Natural killer cell (primary cell): ENCODE measurements at regions of chr12 and their contacts with region 1.

Region 1: GRCh38 chr12:110689281-110690126 is 589 bp upstream of the HVCN1 start:
- DNase-seq: peak; percentile 40 to 74
- ATAC-seq: peak; percentile 77 to 83 (median 80)
- H3K4me3 ChIP-seq: peak overlapping the region; percentile 77
- H3K4me3 Mint-ChIP-seq: peak overlapping the region; percentile 91
- H3K27ac ChIP-seq: peak overlapping the region; percentile 75
- H3K27ac Mint-ChIP-seq: peak overlapping the region; percentile 81 to 92
- H3K4me1 ChIP-seq: peaks cover 65% of the 10 kb centered on the region
- H3K4me1 Mint-ChIP-seq: peaks cover 36 to 56% of the 10 kb centered on the region in 2 donors
- H3K27me3 ChIP-seq: no peaks in the 10 kb centered on the region
- H3K27me3 Mint-ChIP-seq: no peaks in the 10 kb centered on the region
- CTCF ChIP-seq: no peak

Region 2: GRCh38 chr12:110661337-110661972 is 28.0 kb before region 1 on chr12:
- intact Hi-C with region 1: loop called (anchors 1 kb)
- DNase-seq: peak; percentile 72 to 74
- ATAC-seq: peak; percentile 89 to 90 (median 89)
- H3K4me3 ChIP-seq: no peak overlapping the region
- H3K4me3 Mint-ChIP-seq: peak overlapping the region; percentile 76
- H3K27ac ChIP-seq: peak overlapping the region; percentile 80
- H3K27ac Mint-ChIP-seq: peak overlapping the region; percentile 93 to 96
- H3K4me1 ChIP-seq: peaks cover 27% of the 10 kb centered on the region
- H3K4me1 Mint-ChIP-seq: peaks cover 38 to 40% of the 10 kb centered on the region in 2 donors
- H3K27me3 ChIP-seq: no peaks in the 10 kb centered on the region
- H3K27me3 Mint-ChIP-seq: no peaks in the 10 kb centered on the region
- CTCF ChIP-seq: no peak

Region 3: DNA sequence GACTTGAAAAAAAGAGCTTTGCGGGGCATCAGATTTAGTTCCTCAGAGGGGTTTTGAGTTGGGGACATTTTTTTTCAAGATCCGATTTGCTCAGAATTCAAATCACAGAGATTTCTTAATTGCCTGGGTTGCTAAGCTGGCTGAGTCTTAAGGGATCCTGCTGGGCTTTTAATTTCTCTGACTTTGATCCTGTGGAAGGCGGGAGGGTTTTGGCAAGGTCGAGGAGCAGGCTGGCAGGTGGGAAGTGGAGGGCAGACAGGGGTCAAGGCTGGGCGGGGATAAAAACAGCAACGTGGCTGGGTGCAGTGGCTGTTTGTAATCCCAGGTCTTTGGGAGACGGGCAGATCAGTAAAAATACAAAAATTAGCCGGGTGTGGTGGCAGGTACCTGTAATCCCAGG is 123.8 kb after region 1 on chr12:
- intact Hi-C with region 1: no loop called
- DNase-seq: no peak
- ATAC-seq: no peak
- H3K4me3 ChIP-seq: no peak overlapping the region
- H3K4me3 Mint-ChIP-seq: no peak overlapping the region
- H3K27ac ChIP-seq: no peak overlapping the region
- H3K27ac Mint-ChIP-seq: no peak overlapping the region
- H3K4me1 ChIP-seq: no peaks in the 10 kb centered on the region
- H3K4me1 Mint-ChIP-seq: no peaks in the 10 kb centered on the region
- H3K27me3 ChIP-seq: no peaks in the 10 kb centered on the region
- H3K27me3 Mint-ChIP-seq: peaks cover 10 to 17% of the 10 kb centered on the region in 2 donors
- CTCF ChIP-seq: no peak

Region 4: DNA sequence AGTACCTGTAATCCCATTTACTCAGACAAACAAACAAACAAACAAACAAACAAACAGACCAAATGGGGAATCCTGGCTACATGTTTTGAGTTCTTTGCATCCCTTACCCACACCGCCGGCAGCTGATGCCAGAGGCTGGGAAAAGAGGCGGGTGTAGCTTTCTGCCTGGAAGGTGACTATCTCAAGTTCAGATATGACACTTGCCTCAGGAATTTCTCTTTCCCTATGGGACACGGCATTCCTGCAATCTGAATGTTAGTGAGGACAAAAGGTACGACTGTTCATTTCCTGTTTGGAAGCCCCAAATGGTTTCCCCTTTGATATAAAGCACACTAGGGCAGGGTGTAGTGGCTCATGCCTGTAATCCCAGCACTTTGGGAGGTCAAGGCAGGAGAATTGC is 228.0 kb after region 1 on chr12:
- intact Hi-C with region 1: no loop called
- DNase-seq: no peak
- ATAC-seq: no peak
- H3K4me3 ChIP-seq: no peak overlapping the region
- H3K4me3 Mint-ChIP-seq: no peak overlapping the region
- H3K27ac ChIP-seq: no peak overlapping the region
- H3K27ac Mint-ChIP-seq: no peak overlapping the region
- H3K4me1 ChIP-seq: peaks cover 6% of the 10 kb centered on the region
- H3K4me1 Mint-ChIP-seq: no peaks in the 10 kb centered on the region
- H3K27me3 ChIP-seq: no peaks in the 10 kb centered on the region
- H3K27me3 Mint-ChIP-seq: peaks cover 0 to 9% of the 10 kb centered on the region in 2 donors
- CTCF ChIP-seq: no peak